ENCODE measurements at regions of chr9 and their contacts with region 1.

Region 1: DNA sequence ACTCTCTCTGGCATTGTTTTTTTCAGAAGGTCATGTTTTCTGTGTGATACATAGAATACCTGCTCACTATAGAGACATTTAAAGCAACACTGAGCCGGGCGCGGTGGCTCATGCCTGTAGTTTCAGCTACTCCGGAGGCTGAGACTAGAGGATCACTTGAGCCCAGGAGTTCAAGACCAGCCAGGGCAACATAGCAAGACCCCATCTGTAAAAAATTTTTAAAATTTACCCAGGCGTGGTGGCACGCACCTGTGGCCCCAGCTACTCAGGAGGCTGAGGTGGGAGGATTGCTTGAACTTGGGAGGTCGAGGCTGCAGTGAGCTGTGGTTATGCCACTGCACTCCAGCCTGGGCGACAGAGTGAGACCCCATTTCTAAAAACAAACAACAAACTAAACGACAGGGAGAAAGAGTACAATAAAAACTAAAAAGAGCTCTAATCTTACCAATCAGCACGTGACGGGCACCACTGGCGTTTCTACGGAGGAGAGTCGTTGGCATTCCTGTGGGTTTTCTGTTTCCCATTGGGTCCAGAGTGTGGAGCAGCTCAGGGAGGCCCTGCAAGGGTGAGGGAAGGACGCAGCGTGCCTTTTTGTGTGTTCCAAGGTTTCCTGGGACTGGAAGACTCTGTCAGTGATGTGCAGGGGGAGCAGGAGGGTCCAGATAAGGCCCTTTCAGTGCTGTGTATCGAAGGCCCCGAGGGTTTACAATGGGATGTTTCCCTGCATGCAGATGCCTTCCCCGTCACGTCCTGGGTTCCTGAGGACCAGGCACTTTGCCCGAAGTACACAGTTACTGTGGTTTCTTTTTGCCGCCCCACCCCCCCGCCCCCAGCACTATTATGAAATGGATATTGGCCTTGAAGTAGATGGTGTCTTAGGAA is 7.2 kb upstream of the RNU6ATAC start:
- DNase-seq: no peak
- ATAC-seq: no peak
- H3K4me3 ChIP-seq: no peak overlapping the region
- H3K27ac ChIP-seq: no peak overlapping the region
- H3K4me1 ChIP-seq: no peaks in the 10 kb centered on the region
- H3K27me3 ChIP-seq: no peaks in the 10 kb centered on the region
- CTCF ChIP-seq: no peak
- EP300 ChIP-seq: no peak
- POLR2A ChIP-seq: no peak
- RAD21 ChIP-seq: no peak

Region 2: GRCh38 chr9:134217832-134218629 is 46.5 kb after region 1 on chr9:
- CTCF ChIA-PET with region 1: interaction called, 3 read pairs
- POLR2A ChIA-PET with region 1: interaction called, 3 read pairs
- RAD21 ChIA-PET with region 1: no interaction called
- SMC1A ChIA-PET with region 1: interaction called, 3 read pairs
- in situ Hi-C with region 1: no loop called
- intact Hi-C with region 1: loop called (anchors 2 kb)
- DNase-seq: no peak
- ATAC-seq: peak; percentile 29; the same call in 1 of the 3 replicates
- H3K4me3 ChIP-seq: no peak overlapping the region
- H3K27ac ChIP-seq: no peak overlapping the region
- H3K4me1 ChIP-seq: no peaks in the 10 kb centered on the region
- H3K27me3 ChIP-seq: no peaks in the 10 kb centered on the region; a peak in 2 of 4 replicates
- CTCF ChIP-seq: peak; percentile 15 to 37 (median 21); a peak in 4 of 6 replicates
- EP300 ChIP-seq: no peak
- POLR2A ChIP-seq: no peak
- RAD21 ChIP-seq: 0 out of 2 replicates have a peak, but pooled peaks have one; percentile 25

Region 3: GRCh38 chr9:134258828-134259546 is 87.4 kb after region 1 on chr9:
- CTCF ChIA-PET with region 1: no interaction called
- POLR2A ChIA-PET with region 1: no interaction called
- RAD21 ChIA-PET with region 1: no interaction called
- SMC1A ChIA-PET with region 1: no interaction called
- in situ Hi-C with region 1: no loop called
- intact Hi-C with region 1: no loop called
- DNase-seq: no peak
- ATAC-seq: no peak
- H3K4me3 ChIP-seq: no peak overlapping the region
- H3K27ac ChIP-seq: no peak overlapping the region
- H3K4me1 ChIP-seq: no peaks in the 10 kb centered on the region
- H3K27me3 ChIP-seq: no peaks in the 10 kb centered on the region; a peak in 1 of 4 replicates
- CTCF ChIP-seq: no peak
- EP300 ChIP-seq: no peak
- POLR2A ChIP-seq: no peak
- RAD21 ChIP-seq: no peak

Region 4: DNA sequence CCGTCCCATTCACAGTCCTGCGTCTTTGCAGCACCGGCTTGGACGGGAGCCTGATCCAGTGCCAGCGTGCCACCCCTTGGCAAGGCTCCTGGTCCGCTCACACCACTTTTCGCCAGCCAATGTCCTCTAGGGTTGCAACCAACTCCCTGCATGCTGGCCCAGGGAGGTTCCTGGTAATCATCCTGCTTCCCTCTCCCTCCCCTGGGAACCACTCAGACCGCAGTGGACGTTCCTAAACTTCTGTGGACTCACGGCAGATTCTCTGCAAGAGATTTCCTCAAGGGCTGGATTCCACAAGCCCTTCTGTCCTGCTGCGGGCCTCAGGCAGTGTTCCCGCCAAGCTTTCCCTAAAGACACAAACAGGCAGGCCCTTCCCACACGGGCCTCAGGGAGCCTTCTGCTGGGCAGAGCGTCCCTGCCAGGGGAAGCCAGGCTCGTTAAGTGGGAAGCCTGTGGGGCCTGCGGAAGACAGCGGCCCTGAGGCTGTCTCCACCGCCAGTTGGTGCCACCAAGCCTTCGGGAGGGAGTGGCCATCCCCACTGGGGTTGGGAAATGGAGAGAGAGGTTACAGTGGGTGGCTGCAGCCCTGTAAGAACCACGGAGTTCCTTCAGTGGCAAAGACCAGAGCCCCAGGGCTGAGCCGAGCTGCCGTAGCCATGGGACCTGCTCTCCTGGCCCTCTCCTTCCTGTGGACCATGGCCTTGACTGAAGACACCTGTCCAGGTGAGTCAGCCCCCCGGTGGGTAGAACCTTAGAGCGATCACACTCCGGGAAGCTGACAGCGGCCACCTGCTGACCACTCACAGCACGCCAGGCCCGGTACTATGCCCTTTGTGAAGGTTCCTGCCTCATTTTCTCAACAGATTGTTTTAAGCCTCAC is 692.6 kb after region 1 on chr9:
- CTCF ChIA-PET with region 1: no interaction called
- POLR2A ChIA-PET with region 1: no interaction called
- RAD21 ChIA-PET with region 1: no interaction called
- SMC1A ChIA-PET with region 1: no interaction called
- in situ Hi-C with region 1: no loop called
- intact Hi-C with region 1: no loop called
- DNase-seq: no peak
- ATAC-seq: no peak
- H3K4me3 ChIP-seq: no peak overlapping the region
- H3K27ac ChIP-seq: no peak overlapping the region
- H3K4me1 ChIP-seq: peaks cover 3% of the 10 kb centered on the region
- H3K27me3 ChIP-seq: no peaks in the 10 kb centered on the region
- CTCF ChIP-seq: no peak
- EP300 ChIP-seq: no peak
- POLR2A ChIP-seq: no peak
- RAD21 ChIP-seq: no peak

Measured in GM12878 (cell line).